Activated CD8-positive, alpha-beta T cell treated with anti-CD3 and anti-CD28 coated beads for 36 hours (primary cell): ENCODE measurements at regions of chr5 and their contacts with region 1.

Region 1: DNA sequence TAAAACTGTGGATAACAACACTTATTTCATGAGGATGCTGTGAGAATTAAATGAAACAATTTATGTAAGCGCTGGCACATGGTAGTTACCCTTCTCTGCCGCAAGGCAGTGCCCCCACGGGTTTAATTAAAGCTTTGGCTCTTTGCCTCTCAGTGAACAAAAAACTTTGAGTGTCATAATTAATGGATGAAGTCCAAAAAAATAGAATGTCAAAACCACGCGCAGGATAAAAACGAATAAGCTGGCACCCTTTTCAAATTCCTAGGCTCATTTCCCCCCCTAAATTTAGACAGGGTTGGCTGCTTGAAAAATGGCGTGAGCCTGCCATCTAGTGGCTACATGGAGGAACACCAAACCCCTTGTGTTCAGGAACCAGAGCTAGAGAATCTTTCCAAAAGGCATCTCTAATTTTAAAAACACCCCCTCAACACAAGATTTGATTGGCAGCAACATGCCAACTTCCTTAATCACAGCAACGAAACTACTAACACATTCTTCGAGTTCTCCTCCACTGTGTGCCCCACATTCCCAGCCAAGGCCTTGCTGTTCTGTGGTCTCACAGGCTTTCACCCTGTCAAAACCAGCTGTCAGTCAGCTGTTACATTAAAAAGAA is 29.0 kb upstream of the CCNG1 start:
- DNase-seq: peak; percentile 66
- ATAC-seq: peak; percentile 92
- H3K4me3 Mint-ChIP-seq: no peak overlapping the region
- H3K27ac Mint-ChIP-seq: no peak overlapping the region
- H3K4me1 Mint-ChIP-seq: no peaks in the 10 kb centered on the region
- H3K27me3 Mint-ChIP-seq: peaks cover under 1% of the 10 kb centered on the region
- CTCF ChIP-seq: peak; percentile 82

Region 2: GRCh38 chr5:163306421-163306820 is 102.0 kb before region 1 on chr5:
- CTCF ChIA-PET with region 1: interaction called, 25 read pairs
- POLR2A ChIA-PET with region 1: no interaction called
- intact Hi-C with region 1: loop called (anchors 10 kb)
- DNase-seq: no peak
- ATAC-seq: no peak
- H3K4me3 Mint-ChIP-seq: no peak overlapping the region
- H3K27ac Mint-ChIP-seq: no peak overlapping the region
- H3K4me1 Mint-ChIP-seq: no peaks in the 10 kb centered on the region
- H3K27me3 Mint-ChIP-seq: no peaks in the 10 kb centered on the region
- CTCF ChIP-seq: no peak

Region 3: DNA sequence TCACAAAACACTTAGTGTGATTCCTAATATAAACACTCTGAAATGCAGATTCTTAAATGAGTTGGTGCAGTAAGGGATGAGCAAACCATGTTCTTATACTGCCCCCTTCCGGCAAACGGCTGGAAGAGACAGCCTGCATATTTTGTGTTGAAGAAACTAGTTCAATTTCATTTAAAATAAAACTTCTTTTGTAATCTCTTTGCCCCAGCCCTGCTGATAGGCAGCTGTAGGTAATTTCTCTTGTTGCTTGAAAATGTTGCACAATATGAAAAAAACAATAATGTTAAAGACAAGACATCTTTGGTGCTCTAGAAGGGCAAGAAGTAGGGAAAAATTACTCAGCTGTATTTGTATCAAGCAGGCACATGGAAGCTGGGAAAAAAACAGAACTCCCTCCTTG is 60.7 kb before region 1 on chr5:
- CTCF ChIA-PET with region 1: interaction called, 47 read pairs
- POLR2A ChIA-PET with region 1: no interaction called
- intact Hi-C with region 1: no loop called
- DNase-seq: peak; percentile 66
- ATAC-seq: peak; percentile 62
- H3K4me3 Mint-ChIP-seq: no peak overlapping the region
- H3K27ac Mint-ChIP-seq: no peak overlapping the region
- H3K4me1 Mint-ChIP-seq: no peaks in the 10 kb centered on the region
- H3K27me3 Mint-ChIP-seq: peaks cover 1% of the 10 kb centered on the region
- CTCF ChIP-seq: peak; percentile 79

Region 4: GRCh38 chr5:163397354-163397753 is 11.1 kb before region 1 on chr5:
- CTCF ChIA-PET with region 1: interaction called, 17 read pairs
- POLR2A ChIA-PET with region 1: no interaction called
- intact Hi-C with region 1: no loop called
- DNase-seq: no peak
- ATAC-seq: no peak
- H3K4me3 Mint-ChIP-seq: no peak overlapping the region
- H3K27ac Mint-ChIP-seq: no peak overlapping the region
- H3K4me1 Mint-ChIP-seq: no peaks in the 10 kb centered on the region
- H3K27me3 Mint-ChIP-seq: peaks cover 20% of the 10 kb centered on the region
- CTCF ChIP-seq: no peak

Region 5: DNA sequence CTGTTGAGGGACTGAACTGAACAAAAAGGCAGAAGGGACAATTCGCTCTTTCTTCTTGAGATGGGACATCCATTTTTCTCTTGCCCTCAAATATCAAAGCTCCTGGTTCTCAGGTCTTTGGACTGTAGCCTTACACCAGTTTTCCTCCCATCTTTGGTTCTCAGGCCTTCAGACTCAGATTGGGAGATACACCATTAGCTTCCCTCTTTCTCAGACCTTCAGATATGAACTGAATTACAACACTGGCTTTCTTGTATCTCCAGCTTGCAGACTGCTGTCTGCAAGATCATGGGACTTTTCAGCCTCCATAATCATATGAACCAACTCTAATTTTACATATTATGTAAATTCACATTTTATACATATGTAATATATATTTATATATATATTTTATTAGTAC is 16.4 kb after region 1 on chr5:
- CTCF ChIA-PET with region 1: interaction called, 36 read pairs
- POLR2A ChIA-PET with region 1: no interaction called
- intact Hi-C with region 1: no loop called
- DNase-seq: no peak
- ATAC-seq: no peak
- H3K4me3 Mint-ChIP-seq: no peak overlapping the region
- H3K27ac Mint-ChIP-seq: no peak overlapping the region
- H3K4me1 Mint-ChIP-seq: peaks cover 6% of the 10 kb centered on the region
- H3K27me3 Mint-ChIP-seq: peaks cover 2% of the 10 kb centered on the region
- CTCF ChIP-seq: no peak